GM13976 (cell line): ENCODE measurements at regions of chr15 and their contacts with region 1.

Region 1: DNA sequence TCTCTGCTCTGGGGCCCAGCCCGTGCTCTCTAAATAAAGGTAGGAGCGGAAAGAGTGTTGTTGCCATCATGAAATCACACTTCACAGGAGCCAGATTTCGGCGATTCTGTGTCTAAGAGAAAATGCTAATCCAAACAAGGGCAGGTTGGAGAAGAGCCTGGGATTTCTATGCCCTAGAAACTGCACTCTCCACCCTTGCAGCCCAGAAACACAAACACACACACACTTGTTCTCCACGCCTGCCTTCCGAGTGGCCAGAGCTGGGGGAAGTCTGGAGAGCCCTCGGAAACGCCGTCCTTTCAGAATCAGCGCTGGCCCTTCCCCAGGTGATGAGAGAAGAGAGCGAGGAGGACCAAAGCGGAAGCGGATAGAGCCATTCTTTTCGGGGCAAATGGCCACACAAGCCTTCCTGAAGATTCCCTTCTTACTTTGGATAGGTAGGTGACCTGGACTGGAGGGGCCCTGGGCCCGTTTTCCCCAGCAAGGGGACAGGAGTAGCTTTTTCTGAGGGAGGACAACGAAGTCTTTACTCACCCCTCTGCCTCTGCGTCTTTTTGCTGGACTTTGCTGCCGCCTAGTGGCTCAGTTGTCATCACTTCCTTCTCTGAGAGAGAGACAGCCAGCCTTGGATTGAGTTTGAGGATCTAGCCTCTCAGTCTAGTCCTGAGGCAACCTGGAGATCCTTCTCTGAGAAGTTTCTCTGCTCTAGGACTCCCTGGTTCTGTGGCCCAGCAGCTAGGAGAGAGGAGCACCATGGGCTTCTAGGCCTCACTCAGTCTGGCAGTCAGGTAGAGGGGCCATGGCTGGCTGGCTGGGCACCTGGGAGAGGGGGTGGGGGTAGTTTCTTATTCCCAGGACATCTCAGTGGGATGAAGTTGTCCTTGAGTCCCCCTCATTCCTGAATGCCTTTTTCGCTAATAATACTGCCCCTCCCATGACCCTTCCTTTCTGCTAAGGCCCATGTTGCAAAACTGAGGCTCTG is 37.7 kb downstream of the SENP8 start:
- DNase-seq: peak; percentile 80
- CTCF ChIP-seq: peak; percentile 76

Region 2: GRCh38 chr15:71471347-71471746 is 684.6 kb before region 1 on chr15:
- in situ Hi-C with region 1: loop called (anchors 25 kb)
- DNase-seq: peak; percentile 37
- CTCF ChIP-seq: no peak

Region 3: DNA sequence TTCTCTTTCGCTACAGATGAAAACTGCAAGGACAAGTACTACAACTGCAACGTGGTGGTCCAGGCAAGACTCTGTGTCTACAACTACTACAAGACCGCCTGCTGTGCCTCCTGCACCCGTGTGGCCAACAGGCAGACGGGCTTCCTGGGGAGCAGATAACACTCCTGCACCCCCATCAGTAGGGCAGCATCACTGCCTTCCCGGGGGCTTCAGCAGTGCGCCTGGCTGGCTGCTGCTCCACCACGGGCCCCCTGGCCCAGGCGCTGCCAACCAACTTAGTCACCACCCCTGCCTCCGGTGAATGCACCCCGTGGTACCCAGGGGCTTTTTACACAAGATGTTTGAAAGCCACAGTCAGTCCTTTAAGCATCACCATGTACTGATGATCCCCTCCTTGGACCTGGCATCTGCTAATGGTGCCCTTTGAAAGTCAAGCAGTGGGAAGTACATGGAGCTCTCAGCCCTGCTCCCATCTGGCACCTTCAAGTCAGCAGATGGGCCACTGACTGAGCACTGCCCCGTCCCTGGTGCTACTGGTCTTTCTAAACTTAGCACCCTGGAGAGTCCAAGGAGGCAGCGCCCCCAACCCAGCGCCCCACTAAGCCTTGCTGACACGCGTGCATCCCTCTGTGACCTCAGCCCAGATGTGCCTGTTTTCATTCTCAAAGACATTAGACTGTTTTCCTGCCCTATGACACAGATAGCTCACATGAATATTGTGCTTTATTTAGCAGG is 378.5 kb before region 1 on chr15:
- in situ Hi-C with region 1: loop called (anchors 10 kb)
- DNase-seq: no peak
- CTCF ChIP-seq: no peak

Region 4: GRCh38 chr15:71806452-71806931 is 349.4 kb before region 1 on chr15:
- in situ Hi-C with region 1: loop called (anchors 5 kb)
- DNase-seq: peak; percentile 28
- CTCF ChIP-seq: no peak

Region 5: GRCh38 chr15:72242775-72243370 is 86.9 kb after region 1 on chr15:
- in situ Hi-C with region 1: no loop called
- DNase-seq: no peak
- CTCF ChIP-seq: no peak

Region 6: GRCh38 chr15:72411117-72411516 is 255.2 kb after region 1 on chr15:
- in situ Hi-C with region 1: no loop called
- DNase-seq: no peak
- CTCF ChIP-seq: no peak